ENCODE measurements at regions of chr6 and their contacts with region 1.

Region 1: GRCh38 chr6:105781915-105782314 is 304.2 kb upstream of the PRDM1 start:
- DNase-seq: no peak
- H3K4me3 Mint-ChIP-seq: peak overlapping the region; percentile 40
- H3K27ac Mint-ChIP-seq: peak overlapping the region; percentile 62
- H3K4me1 Mint-ChIP-seq: peaks cover 74% of the 10 kb centered on the region
- H3K27me3 Mint-ChIP-seq: no peaks in the 10 kb centered on the region

Region 2: GRCh38 chr6:105757512-105758200 is 24.3 kb before region 1 on chr6:
- intact Hi-C with region 1: loop called (anchors 2 kb)
- DNase-seq: peak; percentile 28
- H3K4me3 Mint-ChIP-seq: peak overlapping the region; percentile 64
- H3K27ac Mint-ChIP-seq: peak overlapping the region; percentile 77
- H3K4me1 Mint-ChIP-seq: peaks cover 61% of the 10 kb centered on the region
- H3K27me3 Mint-ChIP-seq: no peaks in the 10 kb centered on the region

Region 3: GRCh38 chr6:105835373-105835772 is 53.5 kb after region 1 on chr6:
- intact Hi-C with region 1: no loop called
- DNase-seq: no peak
- H3K4me3 Mint-ChIP-seq: no peak overlapping the region
- H3K27ac Mint-ChIP-seq: no peak overlapping the region
- H3K4me1 Mint-ChIP-seq: peaks cover 31% of the 10 kb centered on the region
- H3K27me3 Mint-ChIP-seq: peaks cover 3% of the 10 kb centered on the region

Region 4: DNA sequence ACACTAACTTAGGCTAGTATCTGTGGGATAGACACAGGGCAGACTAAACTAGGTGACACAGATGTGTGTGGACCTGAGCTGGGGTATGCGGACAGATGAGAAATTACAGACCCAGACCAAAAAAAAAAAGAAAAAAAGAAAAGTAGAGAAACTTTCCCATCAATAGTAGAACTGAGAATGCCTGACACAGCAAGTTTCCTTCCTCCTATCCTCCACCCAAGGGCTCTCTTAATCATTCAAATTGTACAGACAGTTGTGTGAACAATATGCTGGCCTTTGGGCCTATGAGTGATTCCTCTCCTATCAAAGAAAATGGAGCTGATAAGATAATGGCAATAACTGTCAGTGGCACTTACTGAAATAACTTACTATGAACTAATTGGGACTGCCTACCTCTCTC is 77.5 kb after region 1 on chr6:
- intact Hi-C with region 1: no loop called
- DNase-seq: no peak
- H3K4me3 Mint-ChIP-seq: no peak overlapping the region
- H3K27ac Mint-ChIP-seq: no peak overlapping the region
- H3K4me1 Mint-ChIP-seq: peaks cover 14% of the 10 kb centered on the region
- H3K27me3 Mint-ChIP-seq: peaks cover 13% of the 10 kb centered on the region

Region 5: GRCh38 chr6:106287205-106287604 is 505.3 kb after region 1 on chr6:
- intact Hi-C with region 1: no loop called
- DNase-seq: no peak
- H3K4me3 Mint-ChIP-seq: no peak overlapping the region
- H3K27ac Mint-ChIP-seq: no peak overlapping the region
- H3K4me1 Mint-ChIP-seq: peaks cover 10% of the 10 kb centered on the region
- H3K27me3 Mint-ChIP-seq: no peaks in the 10 kb centered on the region

Measured in activated T-helper 1 cell treated with anti-CD3 and anti-CD28 coated beads, Interleukin-12 subunit alpha, Interleukin-12 subunit beta, Interleukin-2, Interleukin-4 antibody, amounts not matched to agents 30 ng/mL and 10 ng/mL and 1 ng/mL, durations not matched to agents 14 hours and 24 hours and 36 hours (primary cell).